ENCODE measurements at regions of chr11 and their contacts with region 1.

Region 1: GRCh38 chr11:2691991-2692875 is 7.6 kb downstream of the KCNQ1OT1 start:
- DNase-seq: peak; percentile 55
- ATAC-seq: no peak
- H3K4me3 Mint-ChIP-seq: peak overlapping the region; percentile 24
- H3K27ac Mint-ChIP-seq: peak overlapping the region; percentile 99
- H3K4me1 Mint-ChIP-seq: peaks cover 94% of the 10 kb centered on the region
- H3K27me3 Mint-ChIP-seq: peaks cover 6% of the 10 kb centered on the region; the same call in 1 of the 2 replicates
- CTCF ChIP-seq: peak; percentile 10; the same call in 1 of the 2 replicates

Region 2: GRCh38 chr11:2674658-2675131 is 17.5 kb before region 1 on chr11:
- CTCF ChIA-PET with region 1: interaction called, 10 read pairs
- POLR2A ChIA-PET with region 1: no interaction called
- DNase-seq: no peak
- ATAC-seq: no peak
- H3K4me3 Mint-ChIP-seq: no peak overlapping the region
- H3K27ac Mint-ChIP-seq: no peak overlapping the region
- H3K4me1 Mint-ChIP-seq: peaks cover 28% of the 10 kb centered on the region
- H3K27me3 Mint-ChIP-seq: peaks cover 9% of the 10 kb centered on the region
- CTCF ChIP-seq: no peak

Region 3: GRCh38 chr11:2703363-2704141 is 11.3 kb after region 1 on chr11:
- CTCF ChIA-PET with region 1: interaction called, 16 read pairs
- POLR2A ChIA-PET with region 1: interaction called, 8 read pairs
- DNase-seq: no peak
- ATAC-seq: no peak
- H3K4me3 Mint-ChIP-seq: no peak overlapping the region
- H3K27ac Mint-ChIP-seq: no peak overlapping the region
- H3K4me1 Mint-ChIP-seq: peaks cover 31% of the 10 kb centered on the region
- H3K27me3 Mint-ChIP-seq: peaks cover 81% of the 10 kb centered on the region
- CTCF ChIP-seq: no peak

Region 4: DNA sequence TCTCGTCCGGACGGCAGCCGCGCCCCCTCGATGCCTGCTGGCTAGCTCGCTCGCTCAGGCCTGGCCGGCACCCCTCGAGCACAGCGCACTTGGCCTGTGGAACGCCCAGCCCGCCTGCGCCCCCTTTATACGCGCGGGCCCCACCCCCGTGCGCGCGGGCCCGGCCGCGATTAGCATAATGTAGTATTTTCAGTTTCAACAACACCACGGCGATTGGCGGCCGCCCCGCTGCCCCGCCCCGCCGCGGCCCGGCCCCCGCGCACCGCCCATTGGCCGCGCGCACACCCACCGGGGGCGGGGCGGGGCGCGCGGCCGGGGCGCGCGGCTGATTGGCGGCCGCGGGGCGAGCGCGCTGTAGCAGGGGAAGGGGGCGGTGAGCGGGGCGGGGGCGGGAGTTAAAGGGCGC is 193.4 kb after region 1 on chr11 and contains the start of gene CDKN1C:
- CTCF ChIA-PET with region 1: interaction called, 34 read pairs
- POLR2A ChIA-PET with region 1: interaction called, 9 read pairs
- DNase-seq: peak; percentile 83
- ATAC-seq: peak; percentile 53
- H3K4me3 Mint-ChIP-seq: peak within 1 kb of the TSS; percentile 81
- H3K27ac Mint-ChIP-seq: no peak within 1 kb of the TSS
- H3K4me1 Mint-ChIP-seq: peaks cover 26% of the 10 kb centered on the region
- H3K27me3 Mint-ChIP-seq: peaks cover 66% of the 10 kb centered on the region
- CTCF ChIP-seq: no peak
- total RNA-seq, gene CDKN1C: 25.0 to 35.0 TPM (median 32.4 TPM) in 3 replicates

Region 5: GRCh38 chr11:2892215-2893020 is 200.2 kb after region 1 on chr11:
- CTCF ChIA-PET with region 1: interaction called, 16 read pairs
- POLR2A ChIA-PET with region 1: no interaction called
- DNase-seq: peak; percentile 84
- ATAC-seq: peak; percentile 67
- H3K4me3 Mint-ChIP-seq: peak overlapping the region; percentile 68
- H3K27ac Mint-ChIP-seq: 0 out of 2 replicates have a peak overlapping the region, but pooled peaks have one; percentile 23
- H3K4me1 Mint-ChIP-seq: peaks cover 11% of the 10 kb centered on the region
- H3K27me3 Mint-ChIP-seq: peaks cover 56% of the 10 kb centered on the region
- CTCF ChIP-seq: peak; percentile 93